ENCODE measurements at regions of chr2 and their contacts with region 1.

Region 1: DNA sequence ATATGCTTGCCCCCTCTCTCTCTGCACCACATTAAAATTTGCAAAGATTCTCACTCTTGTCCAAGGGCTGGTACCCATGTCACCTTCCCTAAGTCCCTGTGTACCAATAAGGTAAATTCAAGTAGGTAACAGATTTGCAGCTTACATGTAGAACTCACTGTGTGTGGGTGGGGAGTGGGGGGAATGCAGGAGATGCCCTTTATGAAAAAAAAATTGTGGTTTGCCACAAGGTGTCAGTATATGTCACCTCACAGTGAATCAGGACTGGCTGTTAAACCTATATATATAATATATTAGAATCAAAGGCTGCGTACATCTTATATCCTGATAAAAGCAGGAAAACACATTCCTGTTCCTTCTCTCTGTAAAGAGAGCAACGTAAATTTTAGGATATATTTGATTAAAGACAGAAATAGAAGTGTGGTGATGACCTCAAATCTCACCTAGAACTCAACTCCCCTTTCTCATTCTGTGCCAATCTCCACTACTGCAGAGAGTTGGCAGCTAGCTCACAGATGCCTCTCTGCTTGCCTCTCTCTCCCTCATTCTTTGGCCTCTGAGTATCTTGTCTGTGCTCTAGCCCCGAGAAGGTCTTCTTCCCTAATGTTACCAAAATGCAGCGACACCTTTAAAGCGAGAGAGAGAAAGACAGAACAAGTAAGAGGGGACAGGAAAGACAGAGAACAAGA is 536 bp downstream of the XDH start:
- DNase-seq: peak; percentile 41
- H3K4me3 ChIP-seq: no peak overlapping the region
- H3K27ac ChIP-seq: no peak overlapping the region
- H3K4me1 ChIP-seq: no peaks in the 10 kb centered on the region
- H3K27me3 ChIP-seq: peaks cover 4% of the 10 kb centered on the region
- CTCF ChIP-seq: peak; percentile 50

Region 2: GRCh38 chr2:31387850-31388249 is 26.2 kb before region 1 on chr2:
- CTCF ChIA-PET with region 1: no interaction called
- POLR2A ChIA-PET with region 1: no interaction called
- intact Hi-C with region 1: no loop called
- DNase-seq: no peak
- H3K4me3 ChIP-seq: no peak overlapping the region
- H3K27ac ChIP-seq: no peak overlapping the region
- H3K4me1 ChIP-seq: no peaks in the 10 kb centered on the region
- H3K27me3 ChIP-seq: no peaks in the 10 kb centered on the region
- CTCF ChIP-seq: no peak

Region 3: GRCh38 chr2:31523871-31524492 is 110.0 kb after region 1 on chr2:
- CTCF ChIA-PET with region 1: no interaction called
- POLR2A ChIA-PET with region 1: no interaction called
- intact Hi-C with region 1: loop called (anchors 2 kb)
- DNase-seq: peak; percentile 72
- H3K4me3 ChIP-seq: no peak overlapping the region
- H3K27ac ChIP-seq: no peak overlapping the region
- H3K4me1 ChIP-seq: no peaks in the 10 kb centered on the region
- H3K27me3 ChIP-seq: peaks cover 16% of the 10 kb centered on the region
- CTCF ChIP-seq: peak; percentile 89

Region 4: DNA sequence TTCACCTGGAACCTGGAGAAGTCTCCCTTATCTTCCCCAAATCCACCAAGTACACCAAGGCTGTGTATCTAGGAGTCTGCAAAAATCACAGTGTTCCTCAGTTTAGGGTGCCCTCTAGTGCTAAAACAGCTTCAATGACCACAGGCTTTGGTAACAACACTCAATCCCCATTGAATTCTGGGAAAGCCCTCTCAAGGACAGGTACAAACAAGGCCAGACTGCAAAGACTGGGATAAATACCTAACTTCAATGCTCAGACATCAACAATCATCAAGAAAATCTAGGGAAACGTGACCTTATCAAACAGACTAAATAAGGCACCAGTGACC is 315.7 kb after region 1 on chr2:
- CTCF ChIA-PET with region 1: no interaction called
- POLR2A ChIA-PET with region 1: no interaction called
- intact Hi-C with region 1: loop called (anchors 2 kb)
- DNase-seq: peak; percentile 62
- H3K4me3 ChIP-seq: no peak overlapping the region
- H3K27ac ChIP-seq: no peak overlapping the region
- H3K4me1 ChIP-seq: peaks cover 10% of the 10 kb centered on the region
- H3K27me3 ChIP-seq: no peaks in the 10 kb centered on the region
- CTCF ChIP-seq: peak; percentile 74

Region 5: DNA sequence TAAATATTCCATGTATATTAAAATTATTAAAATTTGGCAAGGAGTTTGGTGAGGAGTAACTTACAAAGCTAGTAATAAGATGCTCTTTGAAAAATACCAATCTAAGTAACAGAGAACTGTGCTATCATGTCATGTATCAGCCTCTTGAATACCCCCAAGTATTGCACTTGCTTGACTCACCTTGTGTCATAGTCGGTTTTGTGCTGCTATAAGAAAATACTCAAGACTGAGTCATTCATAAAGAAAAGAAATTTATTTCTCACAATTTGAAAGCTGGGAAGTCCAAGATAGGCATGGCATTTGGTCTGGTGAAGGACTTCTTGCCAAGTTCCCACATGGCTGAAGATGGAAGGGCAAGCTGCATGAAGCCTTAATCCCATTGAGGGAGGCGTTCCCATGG is 417.6 kb after region 1 on chr2:
- CTCF ChIA-PET with region 1: no interaction called
- POLR2A ChIA-PET with region 1: no interaction called
- intact Hi-C with region 1: loop called (anchors 10 kb)
- DNase-seq: no peak
- H3K4me3 ChIP-seq: no peak overlapping the region
- H3K27ac ChIP-seq: no peak overlapping the region
- H3K4me1 ChIP-seq: no peaks in the 10 kb centered on the region
- H3K27me3 ChIP-seq: no peaks in the 10 kb centered on the region
- CTCF ChIP-seq: no peak